Colonic mucosa (tissue), 4 donors: ENCODE measurements at regions of chr2 and their contacts with region 1.

Region 1: GRCh38 chr2:210063306-210063705 is 60.9 kb downstream of the RPE start:
- DNase-seq: no peak
- H3K4me3 ChIP-seq: no peak overlapping the region
- H3K27ac ChIP-seq: no peak overlapping the region
- H3K4me1 ChIP-seq: no peaks in the 10 kb centered on the region
- H3K27me3 ChIP-seq: no peaks in the 10 kb centered on the region
- CTCF ChIP-seq: no peak

Region 2: DNA sequence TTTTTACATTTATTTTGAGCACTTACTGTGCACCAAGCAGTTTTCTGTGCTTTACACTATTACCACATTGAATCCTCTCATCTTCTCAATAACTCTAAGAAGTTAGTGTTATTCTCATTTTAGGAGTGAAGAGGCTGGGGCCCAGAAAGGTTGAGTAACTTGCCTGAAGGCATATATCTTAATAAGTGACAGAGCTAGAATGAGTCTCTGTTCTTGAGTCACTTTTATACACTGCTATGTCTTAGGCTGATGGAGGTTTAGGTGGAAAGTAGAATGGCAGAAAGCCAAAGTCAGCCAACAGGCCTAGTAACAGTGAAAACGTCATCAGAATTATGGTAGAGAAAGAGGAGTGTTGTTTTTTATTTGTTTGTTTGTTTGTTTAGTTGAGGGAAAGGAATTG is 88.7 kb before region 1 on chr2:
- intact Hi-C with region 1: no loop called
- DNase-seq: no peak
- H3K4me3 ChIP-seq: no peak overlapping the region
- H3K27ac ChIP-seq: no peak overlapping the region
- H3K4me1 ChIP-seq: no peaks in the 10 kb centered on the region
- H3K27me3 ChIP-seq: no peaks in the 10 kb centered on the region
- CTCF ChIP-seq: no peak

Region 3: DNA sequence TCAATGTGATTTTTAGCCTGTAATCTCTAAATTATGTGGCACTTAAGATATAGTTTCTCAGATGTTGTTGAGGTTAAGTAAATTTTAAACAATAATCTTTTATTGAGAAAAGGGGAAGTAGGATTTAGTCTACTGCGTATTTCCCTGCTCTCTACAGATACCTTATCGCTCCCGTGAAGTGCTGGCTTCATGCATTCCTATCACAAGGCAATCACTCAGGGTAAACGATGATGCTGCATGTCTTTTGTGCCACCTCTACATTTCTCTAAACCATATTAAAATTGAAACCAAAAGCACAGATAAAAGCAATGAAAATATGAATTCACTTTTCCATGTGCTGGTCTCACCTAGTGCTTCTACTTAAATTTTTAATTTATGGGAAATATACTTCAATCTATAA is 75.3 kb before region 1 on chr2:
- intact Hi-C with region 1: loop called (anchors 10 kb)
- DNase-seq: no peak
- H3K4me3 ChIP-seq: no peak overlapping the region
- H3K27ac ChIP-seq: no peak overlapping the region
- H3K4me1 ChIP-seq: no peaks in the 10 kb centered on the region
- H3K27me3 ChIP-seq: no peaks in the 10 kb centered on the region
- CTCF ChIP-seq: no peak

Region 4: DNA sequence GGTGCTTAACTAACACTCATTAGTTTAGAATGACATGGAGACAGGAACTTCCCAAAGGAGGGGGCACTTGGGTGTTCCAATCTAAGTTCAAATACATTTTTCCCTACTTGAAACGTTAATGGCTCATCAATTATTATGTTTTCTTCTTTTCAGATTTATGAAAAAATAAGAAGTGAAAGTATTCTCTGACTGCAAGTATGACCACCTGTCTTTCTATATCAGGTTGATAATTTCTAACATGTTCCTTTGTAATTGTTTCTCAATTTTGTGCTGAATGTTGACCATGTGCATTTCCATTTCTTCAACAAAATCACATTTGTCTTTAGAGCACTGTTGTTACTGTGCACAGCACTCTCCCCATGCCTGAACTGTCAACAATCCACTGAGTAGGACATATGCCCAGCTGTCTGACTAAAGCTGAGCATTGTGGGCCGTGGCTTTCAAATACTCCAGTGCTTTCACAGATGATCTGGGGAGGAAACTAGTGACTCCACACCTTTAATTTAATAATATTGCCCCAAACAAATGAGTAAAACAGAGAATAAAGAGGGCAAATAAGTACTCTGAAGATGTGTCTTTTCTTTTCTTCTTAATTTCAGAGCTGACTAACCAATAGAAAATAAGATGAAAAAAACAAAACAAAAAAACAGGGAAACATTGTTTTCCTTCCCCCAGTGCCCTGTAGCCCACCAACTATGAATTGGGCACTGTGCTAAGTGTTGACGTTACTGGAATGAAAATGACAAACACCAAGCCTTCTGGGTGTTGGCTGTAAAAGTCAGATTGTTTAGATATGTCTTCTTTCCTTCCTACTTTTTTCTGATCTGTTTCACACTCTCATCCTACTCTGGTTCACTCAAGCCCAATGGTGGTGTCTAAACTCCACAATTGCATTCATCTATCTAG is 397.3 kb after region 1 on chr2:
- intact Hi-C with region 1: no loop called
- DNase-seq: no peak
- H3K4me3 ChIP-seq: no peak overlapping the region
- H3K27ac ChIP-seq: no peak overlapping the region
- H3K4me1 ChIP-seq: no peaks in the 10 kb centered on the region
- H3K27me3 ChIP-seq: no peaks in the 10 kb centered on the region
- CTCF ChIP-seq: no peak